HepG2 (cell line): ENCODE measurements at regions of chr16 and their contacts with region 1.

Region 1: DNA sequence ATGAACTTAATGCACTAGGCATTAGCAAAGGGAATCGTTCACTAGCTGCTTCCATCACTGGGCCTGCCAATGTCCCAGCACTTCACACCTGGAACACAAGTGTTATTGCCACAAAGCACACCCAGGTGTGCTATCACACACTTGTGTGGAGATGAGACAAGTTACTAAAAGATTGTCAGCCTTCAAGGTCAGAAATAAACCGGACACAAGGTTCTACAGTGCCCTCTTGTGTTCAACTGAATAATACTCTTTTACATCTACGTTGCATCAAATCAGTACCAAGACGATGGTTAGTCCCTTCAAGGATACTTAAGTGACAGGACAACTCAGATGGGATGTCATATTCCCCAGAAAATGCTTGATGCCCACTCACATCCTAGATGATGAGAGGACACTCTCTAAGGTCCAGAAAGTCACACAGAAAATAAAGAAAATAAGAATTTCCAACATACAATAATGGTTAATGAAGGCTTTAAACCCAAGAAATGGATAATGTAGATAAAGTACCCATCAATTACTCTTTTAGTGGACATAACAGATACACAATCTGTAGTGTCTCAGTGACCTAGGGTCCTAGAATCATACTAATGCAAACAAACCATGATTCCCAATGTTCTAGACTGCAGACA is 16.4 kb upstream of the GLG1 start:
- DNase-seq: peak; percentile 55
- ATAC-seq: peak; percentile 61
- H3K4me3 ChIP-seq: no peak overlapping the region
- H3K27ac ChIP-seq: no peak overlapping the region
- H3K4me1 ChIP-seq: no peaks in the 10 kb centered on the region
- H3K27me3 ChIP-seq: no peaks in the 10 kb centered on the region
- CTCF ChIP-seq: peak; percentile 86
- EP300 ChIP-seq: no peak
- POLR2A ChIP-seq: no peak
- RAD21 ChIP-seq: peak; percentile 73

Region 2: DNA sequence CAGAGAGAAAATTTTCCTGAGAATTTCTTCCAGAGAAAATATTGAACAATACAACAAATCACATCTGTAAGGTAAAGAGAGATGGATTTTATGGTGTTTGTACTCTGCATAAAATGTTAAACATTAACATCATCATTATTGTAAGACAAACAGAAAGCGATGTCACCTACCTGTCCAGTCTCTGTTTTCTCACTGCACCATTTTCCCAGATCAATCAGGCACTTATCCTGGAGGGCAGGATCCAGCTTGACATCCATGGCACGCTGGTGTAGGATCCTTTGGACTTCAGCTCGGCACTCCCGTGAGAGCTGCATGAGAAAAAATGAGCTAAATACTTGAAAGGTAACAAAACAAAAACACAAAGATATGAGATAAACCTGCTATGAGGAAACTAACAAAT is 146.1 kb before region 1 on chr16:
- CTCF ChIA-PET with region 1: no interaction called
- POLR2A ChIA-PET with region 1: no interaction called
- in situ Hi-C with region 1: no loop called
- intact Hi-C with region 1: loop called (anchors 5 kb)
- DNase-seq: peak; percentile 48
- ATAC-seq: peak; percentile 77
- H3K4me3 ChIP-seq: no peak overlapping the region
- H3K27ac ChIP-seq: no peak overlapping the region
- H3K4me1 ChIP-seq: peaks cover 13% of the 10 kb centered on the region
- H3K27me3 ChIP-seq: no peaks in the 10 kb centered on the region
- CTCF ChIP-seq: no peak
- EP300 ChIP-seq: no peak
- POLR2A ChIP-seq: no peak
- RAD21 ChIP-seq: no peak